K562 (cell line): ENCODE measurements at regions of chr18 and their contacts with region 1.

Region 1: GRCh38 chr18:79334496-79335233 is 61.1 kb upstream of the NFATC1 start:
- DNase-seq: no peak
- ATAC-seq: no peak
- H3K4me3 ChIP-seq: no peak overlapping the region
- H3K27ac ChIP-seq: no peak overlapping the region
- H3K4me1 ChIP-seq: no peaks in the 10 kb centered on the region
- H3K27me3 ChIP-seq: no peaks in the 10 kb centered on the region
- CTCF ChIP-seq: no peak
- EP300 ChIP-seq: no peak
- POLR2A ChIP-seq: no peak
- RAD21 ChIP-seq: no peak

Region 2: DNA sequence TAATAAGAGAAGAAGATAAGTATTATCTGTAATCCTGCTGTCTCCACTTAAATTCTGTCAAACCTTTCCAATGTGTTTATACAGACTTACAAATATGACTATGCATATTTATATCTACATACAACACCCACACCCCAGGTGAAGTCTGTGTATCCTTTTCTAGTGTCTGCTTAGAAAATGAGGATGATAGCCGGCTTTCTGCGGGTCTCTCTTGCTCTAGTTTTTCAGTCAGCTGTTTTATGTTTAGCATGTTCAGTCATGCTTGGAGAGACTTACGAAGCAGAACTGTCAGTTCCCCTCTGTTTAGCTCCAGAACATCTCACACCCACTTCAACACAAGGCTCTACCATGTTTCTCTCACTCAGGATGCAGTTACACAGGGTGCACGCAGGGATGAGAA is 76.2 kb before region 1 on chr18:
- CTCF ChIA-PET with region 1: no interaction called
- POLR2A ChIA-PET with region 1: no interaction called
- in situ Hi-C with region 1: no loop called
- intact Hi-C with region 1: loop called (anchors 2 kb)
- DNase-seq: peak; percentile 14 to 49 (median 32)
- ATAC-seq: peak; percentile 68
- H3K4me3 ChIP-seq: no peak overlapping the region
- H3K27ac ChIP-seq: peak overlapping the region; percentile 58; the same call in 2 of the 3 replicates
- H3K4me1 ChIP-seq: peaks cover 6 to 25% of the 10 kb centered on the region in 2 experiments; a peak in 3 of 5 replicates
- H3K27me3 ChIP-seq: no peaks in the 10 kb centered on the region
- CTCF ChIP-seq: no peak
- EP300 ChIP-seq: no peak
- POLR2A ChIP-seq: no peak
- RAD21 ChIP-seq: no peak